Breast epithelium (tissue), 4 donors: ENCODE measurements at regions of chr17 and their contacts with region 1.

Region 1: GRCh38 chr17:82320956-82321927 is 3.8 kb upstream of the CD7 start:
- DNase-seq: no peak
- H3K4me3 ChIP-seq: peak overlapping the region in 2 of 3 donors; percentile 35 to 51
- H3K27ac ChIP-seq: no peak overlapping the region
- H3K4me1 ChIP-seq: no peaks in the 10 kb centered on the region
- H3K27me3 ChIP-seq: peaks cover 0 to 13% of the 10 kb centered on the region in 2 donors
- CTCF ChIP-seq: peak; percentile 87 to 94 (median 94)
- POLR2A ChIP-seq: no peak

Region 2: GRCh38 chr17:82205719-82206508 is 115.3 kb before region 1 on chr17:
- intact Hi-C with region 1: loop called (anchors 10 kb)
- DNase-seq: peak; percentile 84
- H3K4me3 ChIP-seq: peak overlapping the region in 2 of 3 donors; percentile 25 to 45
- H3K27ac ChIP-seq: peak overlapping the region; percentile 92 to 93
- H3K4me1 ChIP-seq: peaks cover 0 to 9% of the 10 kb centered on the region in 2 donors
- H3K27me3 ChIP-seq: no peaks in the 10 kb centered on the region
- CTCF ChIP-seq: peak; percentile 96
- POLR2A ChIP-seq: no peak

Region 3: DNA sequence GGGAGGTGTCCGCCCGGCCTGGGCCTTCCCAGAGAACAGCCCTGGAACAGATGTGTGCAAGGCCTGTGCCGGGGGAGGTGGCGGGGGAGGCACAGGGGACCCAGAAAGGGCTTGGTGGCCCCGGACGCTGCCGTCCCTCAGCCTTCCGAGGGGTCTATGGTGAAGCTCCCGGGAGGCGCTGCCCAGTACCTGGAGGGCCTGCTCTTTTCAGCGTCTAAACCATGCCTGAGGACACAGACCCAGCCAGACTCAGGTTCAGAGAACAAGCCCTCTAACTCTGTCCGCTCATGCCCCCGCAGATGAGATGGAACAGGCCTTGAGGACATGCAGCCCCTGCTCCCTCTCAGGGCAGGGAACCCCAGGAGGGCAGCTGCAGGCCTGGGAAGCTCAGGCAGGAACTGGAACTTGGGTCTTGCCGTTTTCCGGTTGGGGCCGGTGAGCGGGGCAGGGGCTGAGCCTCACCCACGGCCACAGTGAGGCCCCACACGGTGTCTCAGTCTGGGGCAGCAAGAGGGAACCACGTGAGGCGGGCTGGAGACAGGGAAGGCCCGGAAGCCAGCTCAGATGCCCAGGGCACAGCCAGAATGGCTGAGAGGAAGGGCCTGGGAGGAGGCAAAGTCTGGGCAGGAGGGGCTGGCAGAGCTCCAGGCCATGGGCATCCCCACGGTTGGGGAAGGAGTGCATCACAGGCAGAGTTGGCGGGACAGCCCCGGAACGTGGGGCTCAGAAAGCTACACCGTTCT is 79.9 kb before region 1 on chr17:
- intact Hi-C with region 1: loop called (anchors 10 kb)
- DNase-seq: peak in 1 of 2 donors; percentile 61
- H3K4me3 ChIP-seq: peak overlapping the region in 1 of 3 donors; percentile 33
- H3K27ac ChIP-seq: peak overlapping the region; percentile 79 to 85
- H3K4me1 ChIP-seq: peaks cover 37 to 58% of the 10 kb centered on the region in 2 donors
- H3K27me3 ChIP-seq: no peaks in the 10 kb centered on the region
- CTCF ChIP-seq: no peak
- POLR2A ChIP-seq: no peak

Region 4: GRCh38 chr17:82536512-82537201 is 215.4 kb after region 1 on chr17:
- intact Hi-C with region 1: no loop called
- DNase-seq: no peak
- H3K4me3 ChIP-seq: peak overlapping the region in 2 of 3 donors; percentile 8 to 43
- H3K27ac ChIP-seq: peak overlapping the region; percentile 92 to 94
- H3K4me1 ChIP-seq: peaks cover 5 to 12% of the 10 kb centered on the region in 2 donors
- H3K27me3 ChIP-seq: no peaks in the 10 kb centered on the region
- CTCF ChIP-seq: no peak
- POLR2A ChIP-seq: no peak